Breast epithelium (tissue), 4 donors: ENCODE measurements at regions of chr17 and their contacts with region 1.

Region 1: DNA sequence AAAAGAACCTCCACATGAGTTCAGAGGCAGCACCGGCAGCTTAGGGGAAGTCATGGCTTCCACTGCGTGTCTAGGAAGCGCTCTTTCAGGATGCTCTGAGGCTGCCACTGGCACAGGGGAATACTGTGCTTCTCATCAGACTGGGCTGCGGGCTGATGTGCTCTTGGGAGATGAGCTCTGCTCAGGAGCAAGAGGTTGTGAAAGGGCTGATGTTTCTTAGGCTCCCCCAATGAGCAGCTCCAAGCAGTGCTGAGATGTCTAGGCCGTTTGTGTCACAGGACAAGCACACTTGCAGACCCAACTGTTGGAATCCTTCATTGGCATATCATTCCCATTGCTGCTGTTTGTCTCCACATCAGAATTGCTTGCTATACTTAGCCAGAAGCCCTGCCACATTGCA is 3.6 kb downstream of the SP2 start:
- DNase-seq: no peak
- H3K4me3 ChIP-seq: no peak overlapping the region
- H3K27ac ChIP-seq: peak overlapping the region; percentile 81 to 100
- H3K4me1 ChIP-seq: peaks cover 5 to 38% of the 10 kb centered on the region in 2 donors
- H3K27me3 ChIP-seq: no peaks in the 10 kb centered on the region
- CTCF ChIP-seq: no peak
- POLR2A ChIP-seq: no peak

Region 2: GRCh38 chr17:47862621-47863440 is 36.8 kb before region 1 on chr17:
- intact Hi-C with region 1: no loop called
- DNase-seq: no peak
- H3K4me3 ChIP-seq: no peak overlapping the region
- H3K27ac ChIP-seq: no peak overlapping the region
- H3K4me1 ChIP-seq: peaks cover 0 to 14% of the 10 kb centered on the region in 2 donors
- H3K27me3 ChIP-seq: no peaks in the 10 kb centered on the region
- CTCF ChIP-seq: no peak
- POLR2A ChIP-seq: no peak

Region 3: GRCh38 chr17:47918006-47918405 is 18.4 kb after region 1 on chr17:
- intact Hi-C with region 1: loop called (anchors 1 kb)
- DNase-seq: no peak
- H3K4me3 ChIP-seq: no peak overlapping the region
- H3K27ac ChIP-seq: no peak overlapping the region
- H3K4me1 ChIP-seq: peaks cover 14 to 17% of the 10 kb centered on the region in 2 donors
- H3K27me3 ChIP-seq: no peaks in the 10 kb centered on the region
- CTCF ChIP-seq: no peak
- POLR2A ChIP-seq: no peak

Region 4: DNA sequence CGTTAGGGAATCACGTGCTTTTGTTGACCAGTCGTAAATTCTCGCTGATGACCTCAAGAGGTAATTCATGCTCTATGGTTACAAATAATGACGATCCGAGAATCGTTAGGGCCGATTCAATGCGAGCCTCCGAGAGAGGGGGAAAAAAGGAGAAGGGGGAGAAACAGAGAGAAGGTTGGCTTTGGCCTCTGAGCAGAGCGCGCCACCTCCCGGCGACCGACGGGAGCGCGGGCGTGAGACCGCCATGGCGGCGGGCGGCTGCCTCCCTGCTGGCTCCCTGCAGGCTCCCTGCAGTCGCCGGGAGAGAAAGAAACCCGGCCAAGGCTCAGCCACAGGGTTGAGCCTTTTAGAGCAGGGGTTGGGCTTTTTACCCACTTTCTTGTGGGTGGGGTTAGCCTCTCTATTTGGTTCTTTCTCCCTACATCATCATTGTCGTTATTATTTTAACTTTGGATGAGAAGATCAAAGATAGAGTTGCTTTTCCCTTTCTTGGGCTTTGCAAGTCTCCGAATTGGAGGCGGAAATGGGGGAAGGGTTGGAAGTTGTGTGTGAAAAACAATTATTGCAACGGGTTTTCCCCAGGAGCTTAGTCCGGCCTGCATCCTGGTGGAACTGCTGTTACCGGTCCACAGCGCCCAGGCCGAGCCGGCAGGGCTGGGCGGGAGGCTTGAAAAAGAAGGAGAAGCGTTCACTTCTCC is 694.3 kb after region 1 on chr17:
- intact Hi-C with region 1: no loop called
- DNase-seq: peak in 1 of 2 donors; percentile 79
- H3K4me3 ChIP-seq: peak overlapping the region; percentile 41 to 68 (median 43)
- H3K27ac ChIP-seq: no peak overlapping the region
- H3K4me1 ChIP-seq: peaks cover 0 to 10% of the 10 kb centered on the region in 2 donors
- H3K27me3 ChIP-seq: peaks cover 0 to 82% of the 10 kb centered on the region in 2 donors
- CTCF ChIP-seq: peak; percentile 70 to 81 (median 73)
- POLR2A ChIP-seq: no peak